ENCODE measurements at regions of chr3 and their contacts with region 1.

Region 1: DNA sequence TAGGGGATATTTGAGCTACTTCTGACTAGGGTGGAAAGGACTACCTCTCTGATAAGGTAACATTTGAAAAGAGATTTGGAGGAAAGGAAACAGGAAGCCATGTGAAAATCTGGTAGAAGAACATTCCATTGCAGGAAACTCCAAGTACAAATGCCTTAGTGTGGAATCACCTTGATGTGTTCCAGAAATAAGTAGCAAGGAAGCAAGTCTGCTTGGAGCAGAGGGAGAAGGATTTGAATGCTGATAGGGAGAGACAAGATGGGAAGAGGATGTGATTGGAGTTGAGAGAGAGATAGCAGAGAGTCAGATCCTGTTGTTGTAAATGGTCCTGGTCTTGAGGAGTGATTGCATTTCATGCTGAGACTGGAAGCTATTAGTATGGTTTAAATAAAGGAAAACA is 335.1 kb upstream of the DCBLD2 start:
- DNase-seq: no peak
- ATAC-seq: no peak
- H3K4me3 ChIP-seq: no peak overlapping the region
- H3K27ac ChIP-seq: no peak overlapping the region
- H3K4me1 ChIP-seq: peaks cover 4 to 10% of the 10 kb centered on the region in 2 donors
- H3K27me3 ChIP-seq: no peaks in the 10 kb centered on the region

Region 2: GRCh38 chr3:99410789-99411311 is 174.3 kb after region 1 on chr3:
- intact Hi-C with region 1: loop called in 1 of 2 experiments (anchors 10 kb)
- DNase-seq: peak in 1 of 2 donors; percentile 47
- ATAC-seq: no peak
- H3K4me3 ChIP-seq: no peak overlapping the region
- H3K27ac ChIP-seq: peak overlapping the region in 1 of 2 donors; percentile 40
- H3K4me1 ChIP-seq: peaks cover 0 to 4% of the 10 kb centered on the region in 2 donors
- H3K27me3 ChIP-seq: no peaks in the 10 kb centered on the region

Region 3: DNA sequence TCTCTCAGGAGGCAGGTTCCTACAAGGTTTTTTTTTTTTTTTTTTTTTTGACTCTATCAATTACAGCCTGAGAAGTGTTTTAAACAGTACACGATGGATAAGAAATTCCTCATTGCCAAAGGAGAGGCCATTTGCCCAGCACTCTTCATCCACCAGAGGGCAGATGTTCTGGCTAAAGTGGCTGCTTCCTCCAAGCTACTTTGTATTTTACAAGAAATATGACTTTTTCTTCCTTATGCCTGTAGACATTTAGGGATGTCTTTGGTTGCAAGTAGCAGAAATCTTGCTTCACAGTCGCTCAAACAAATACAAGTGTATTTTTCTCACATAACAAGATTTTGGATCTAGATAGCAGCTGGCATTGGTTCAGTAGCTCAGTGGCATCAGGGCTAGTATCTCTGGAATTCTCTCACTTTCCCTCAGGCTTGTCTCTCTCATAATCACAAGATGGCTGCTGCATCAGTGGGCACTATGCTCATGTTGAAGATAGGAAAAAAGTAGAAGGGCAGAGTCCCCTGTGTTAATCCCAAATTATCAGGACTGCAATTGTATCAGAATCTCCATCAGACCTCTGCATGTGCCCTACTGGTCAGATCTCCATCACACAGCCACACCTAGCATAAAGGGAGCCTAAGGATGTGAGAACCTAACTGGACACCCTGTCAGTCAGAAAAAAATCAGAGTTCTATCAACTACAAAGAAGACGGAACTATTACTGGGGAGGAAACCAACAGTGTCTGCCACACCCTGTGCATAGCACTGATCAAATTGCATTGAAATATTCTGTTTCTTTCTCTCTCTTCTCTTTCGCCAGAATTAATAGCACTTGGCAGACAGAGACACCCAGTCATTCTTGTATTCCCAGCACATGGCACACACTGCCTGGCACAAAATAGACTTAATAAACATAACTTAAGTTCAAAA is 262.9 kb after region 1 on chr3:
- intact Hi-C with region 1: loop called in 1 of 2 experiments (anchors 10 kb)
- DNase-seq: no peak
- ATAC-seq: peak; percentile 75
- H3K4me3 ChIP-seq: no peak overlapping the region
- H3K27ac ChIP-seq: peak overlapping the region; percentile 87 to 99
- H3K4me1 ChIP-seq: peaks cover 9 to 11% of the 10 kb centered on the region in 2 donors
- H3K27me3 ChIP-seq: no peaks in the 10 kb centered on the region

Region 4: DNA sequence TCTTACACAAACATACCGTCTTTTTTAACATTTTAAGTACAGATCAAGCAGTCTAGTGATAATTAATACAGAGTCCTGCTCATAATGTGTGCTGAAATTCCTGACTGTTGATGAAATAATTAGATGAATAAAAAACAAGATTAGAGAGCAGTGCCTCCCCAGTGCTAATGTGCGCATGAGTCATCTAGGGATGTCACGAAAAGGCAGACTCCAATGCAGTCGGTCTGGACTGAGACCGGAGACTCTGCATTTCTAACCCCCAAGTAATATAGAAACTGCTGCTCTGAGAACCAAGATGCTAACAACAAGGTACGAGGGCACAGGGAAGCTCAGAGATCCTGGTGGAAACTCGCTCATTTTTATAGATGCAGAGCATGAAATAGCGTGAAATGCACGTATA is 463.3 kb after region 1 on chr3:
- intact Hi-C with region 1: no loop called
- DNase-seq: no peak
- ATAC-seq: no peak
- H3K4me3 ChIP-seq: no peak overlapping the region
- H3K27ac ChIP-seq: no peak overlapping the region
- H3K4me1 ChIP-seq: peaks cover 6 to 10% of the 10 kb centered on the region in 2 donors
- H3K27me3 ChIP-seq: no peaks in the 10 kb centered on the region

Region 5: DNA sequence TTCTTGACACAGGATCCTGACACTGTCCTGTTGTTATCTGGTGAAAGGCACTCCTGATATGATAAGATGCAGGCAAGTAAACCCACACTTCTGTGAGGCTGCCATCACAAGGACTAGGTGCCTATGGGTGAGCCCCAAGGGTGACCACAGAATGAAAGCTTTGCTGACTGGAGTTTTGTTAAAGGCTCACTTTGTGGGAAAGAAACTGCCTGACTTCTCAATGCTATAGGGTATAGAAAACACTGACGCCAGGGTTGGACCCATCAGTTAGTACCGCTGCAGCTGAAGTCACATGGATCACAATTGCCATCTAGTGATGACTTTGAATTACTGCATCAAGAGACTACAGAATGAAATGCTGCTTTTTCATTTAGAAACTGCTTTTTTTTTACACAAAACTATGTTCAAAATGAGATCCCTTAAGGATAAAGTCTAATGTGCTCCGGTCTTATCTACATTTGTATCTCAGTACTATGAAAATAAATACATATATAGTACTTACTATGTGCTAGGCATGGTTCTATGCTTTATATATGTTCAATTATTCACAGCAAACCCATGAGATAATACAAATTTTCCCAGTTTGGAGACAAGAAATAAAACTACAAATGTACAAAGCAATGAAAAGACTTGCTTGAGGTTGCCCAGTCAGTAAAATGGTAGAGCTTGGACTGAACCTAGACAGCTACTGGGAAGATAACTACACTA is 516.8 kb after region 1 on chr3:
- intact Hi-C with region 1: loop called in 1 of 2 experiments (anchors 10 kb)
- DNase-seq: no peak
- ATAC-seq: peak; percentile 75
- H3K4me3 ChIP-seq: no peak overlapping the region
- H3K27ac ChIP-seq: peak overlapping the region in 1 of 2 donors; percentile 67
- H3K4me1 ChIP-seq: peaks cover 1 to 9% of the 10 kb centered on the region in 2 donors
- H3K27me3 ChIP-seq: no peaks in the 10 kb centered on the region

Measured in aorta (tissue), 5 donors.